ENCODE measurements at regions of chr12 and their contacts with region 1.

Region 1: DNA sequence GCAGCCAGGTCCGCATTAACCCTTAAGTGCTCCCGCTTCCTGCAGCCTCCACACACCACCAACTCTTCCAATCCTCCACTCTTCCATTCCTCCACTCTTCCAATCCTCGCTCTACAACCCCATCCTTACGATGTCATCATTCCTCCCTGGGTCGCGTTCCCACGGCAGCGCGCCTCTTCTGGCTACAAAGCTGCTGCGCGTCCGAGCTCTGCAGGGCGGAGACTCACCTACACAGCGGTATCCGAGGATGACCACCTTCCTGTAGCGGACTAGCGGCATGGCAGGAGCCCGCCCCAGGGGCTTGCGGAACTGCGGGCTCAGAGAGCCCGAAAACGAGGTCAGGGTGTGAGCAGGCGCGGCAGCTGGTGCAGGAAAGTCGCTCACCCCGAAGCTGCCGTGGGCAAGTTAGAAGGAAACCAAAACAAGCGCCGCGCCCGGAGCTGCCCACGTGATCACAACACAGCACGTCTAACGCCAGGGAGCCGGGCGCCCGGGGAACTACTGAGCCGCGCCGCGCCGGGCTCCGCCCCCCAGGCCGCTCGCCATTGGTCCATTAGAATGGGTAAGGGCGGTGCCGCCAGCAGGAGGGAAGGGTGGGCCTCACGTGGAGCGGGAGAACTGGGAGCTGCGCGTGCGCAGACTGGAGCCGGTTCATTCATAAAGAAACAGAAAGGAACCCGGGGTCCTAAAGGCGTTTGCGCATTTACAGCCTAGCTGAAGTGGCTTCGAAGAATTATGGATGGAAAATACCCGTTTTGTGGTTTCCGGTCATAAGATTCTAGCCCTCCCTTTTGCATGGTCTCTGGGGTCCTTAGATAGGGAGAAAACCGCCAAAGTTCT is at the start of gene RHEBL1:
- DNase-seq: peak; percentile 99
- ATAC-seq: peak; percentile 100
- H3K4me3 ChIP-seq: peak within 1 kb of the TSS; percentile 69 to 96 (median 87)
- H3K4me3 Mint-ChIP-seq: peak within 1 kb of the TSS; percentile 94
- H3K27ac ChIP-seq: peak within 1 kb of the TSS; percentile 61 to 92
- H3K27ac Mint-ChIP-seq: peak within 1 kb of the TSS; percentile 86
- H3K4me1 ChIP-seq: peaks cover 10 to 15% of the 10 kb centered on the region in 2 donors
- H3K4me1 Mint-ChIP-seq: peaks cover 19% of the 10 kb centered on the region
- H3K27me3 ChIP-seq: no peaks in the 10 kb centered on the region
- H3K27me3 Mint-ChIP-seq: no peaks in the 10 kb centered on the region
- CTCF ChIP-seq: no peak
- total RNA-seq, gene RHEBL1: 3.0 TPM in 2 replicates

Region 2: DNA sequence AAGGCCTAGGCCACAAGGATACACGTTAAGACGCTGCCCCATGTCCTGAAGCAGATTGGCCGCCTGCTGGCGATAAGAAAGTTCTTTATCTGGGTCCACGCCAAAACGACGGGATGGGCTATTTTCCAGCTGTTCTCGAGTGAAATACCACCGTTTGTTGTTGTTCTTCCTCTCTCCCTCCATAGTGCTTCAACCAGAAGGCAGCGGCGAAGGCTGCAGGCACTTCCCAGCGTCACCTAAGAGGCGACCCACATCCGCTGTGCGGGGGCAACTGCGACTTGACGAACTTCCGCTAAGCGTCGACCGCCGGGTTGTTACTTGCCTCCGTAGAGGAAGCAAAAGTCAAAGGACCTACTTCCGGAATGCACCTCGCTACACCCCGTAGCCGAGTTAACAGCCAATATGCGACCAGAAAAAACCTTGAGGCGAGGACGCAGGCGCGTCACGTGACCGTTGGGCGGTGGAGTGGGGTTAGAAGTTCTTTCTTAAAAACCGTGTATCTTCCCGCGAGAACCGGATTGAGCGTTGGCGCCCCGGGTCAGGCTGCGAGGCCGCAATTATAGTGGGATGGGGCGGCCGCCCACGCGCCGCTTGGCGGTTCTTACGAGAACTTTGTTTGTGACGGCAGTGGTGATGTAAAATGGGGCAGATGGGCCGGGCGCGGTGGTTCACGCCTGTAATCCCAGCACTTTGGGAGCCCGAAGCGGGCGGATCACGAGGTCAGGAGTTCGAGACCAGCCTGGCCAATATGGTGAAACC is 353.1 kb before region 1 on chr12 and contains the start of gene CCNT1:
- CTCF ChIA-PET with region 1: no interaction called
- POLR2A ChIA-PET with region 1: no interaction called
- intact Hi-C with region 1: loop called (anchors 10 kb)
- DNase-seq: peak; percentile 100
- ATAC-seq: peak; percentile 91
- H3K4me3 ChIP-seq: peak within 1 kb of the TSS; percentile 82 to 98 (median 95)
- H3K4me3 Mint-ChIP-seq: peak within 1 kb of the TSS; percentile 88
- H3K27ac ChIP-seq: peak within 1 kb of the TSS; percentile 95 to 96
- H3K27ac Mint-ChIP-seq: peak within 1 kb of the TSS; percentile 97
- H3K4me1 ChIP-seq: peaks cover 19 to 27% of the 10 kb centered on the region in 2 donors
- H3K4me1 Mint-ChIP-seq: peaks cover 34% of the 10 kb centered on the region
- H3K27me3 ChIP-seq: no peaks in the 10 kb centered on the region
- H3K27me3 Mint-ChIP-seq: peaks cover 4% of the 10 kb centered on the region
- CTCF ChIP-seq: no peak
- total RNA-seq, gene CCNT1: 73.1 and 77.3 TPM in 2 replicates

Region 3: GRCh38 chr12:49018261-49019119 is 51.2 kb before region 1 on chr12 and contains the start of gene PRKAG1:
- CTCF ChIA-PET with region 1: interaction called, 3 read pairs
- POLR2A ChIA-PET with region 1: no interaction called
- intact Hi-C with region 1: loop called (anchors 1 kb)
- DNase-seq: peak; percentile 98
- ATAC-seq: peak; percentile 88
- H3K4me3 ChIP-seq: peak within 1 kb of the TSS; percentile 79 to 88 (median 86)
- H3K4me3 Mint-ChIP-seq: peak within 1 kb of the TSS; percentile 91
- H3K27ac ChIP-seq: peak within 1 kb of the TSS; percentile 95 to 99
- H3K27ac Mint-ChIP-seq: peak within 1 kb of the TSS; percentile 98
- H3K4me1 ChIP-seq: peaks cover 18 to 21% of the 10 kb centered on the region in 2 donors
- H3K4me1 Mint-ChIP-seq: peaks cover 29% of the 10 kb centered on the region
- H3K27me3 ChIP-seq: no peaks in the 10 kb centered on the region
- H3K27me3 Mint-ChIP-seq: no peaks in the 10 kb centered on the region
- CTCF ChIP-seq: peak; percentile 74
- total RNA-seq, gene PRKAG1: 58.6 and 60.0 TPM in 2 replicates

Region 4: DNA sequence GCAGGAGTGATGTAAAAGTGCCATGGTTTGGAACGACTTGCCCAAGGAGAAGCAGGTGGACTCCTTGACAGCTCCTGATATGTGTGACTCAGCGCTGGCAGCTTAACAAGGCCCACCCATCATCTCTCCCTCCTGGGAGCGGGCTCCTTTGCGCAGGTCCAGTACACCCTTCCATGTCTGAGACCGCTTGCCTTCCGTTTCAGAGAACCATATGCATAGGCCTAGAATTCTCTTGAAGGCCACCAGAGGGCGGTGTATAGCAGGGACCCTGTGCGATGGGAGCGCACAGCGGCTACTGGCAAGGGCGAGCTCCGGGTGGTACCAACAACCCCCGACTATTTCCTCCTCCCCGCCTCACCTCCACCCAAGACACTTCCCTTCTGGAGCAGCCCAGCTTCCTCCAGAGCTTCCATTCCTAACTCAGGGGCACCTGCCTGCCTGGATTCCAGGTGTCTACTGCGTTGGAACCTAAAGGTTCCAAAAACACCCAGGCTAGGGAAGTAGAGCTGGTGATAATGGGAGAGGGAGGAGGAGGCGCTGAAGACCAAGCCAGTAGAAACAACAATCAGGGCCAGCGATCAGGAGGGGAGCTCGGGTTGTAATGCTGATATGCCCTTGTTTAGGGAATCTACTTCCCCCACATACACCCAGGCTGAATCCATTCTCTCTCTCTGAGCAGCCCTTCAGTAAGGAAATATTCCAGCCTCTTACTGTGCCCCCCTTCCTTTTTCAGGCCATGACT is 18.6 kb after region 1 on chr12:
- CTCF ChIA-PET with region 1: interaction called, 199 read pairs
- POLR2A ChIA-PET with region 1: no interaction called
- intact Hi-C with region 1: loop called (anchors 1 kb)
- DNase-seq: peak; percentile 88
- ATAC-seq: peak; percentile 92
- H3K4me3 ChIP-seq: peak overlapping the region in 1 of 5 experiments; percentile 10
- H3K4me3 Mint-ChIP-seq: peak overlapping the region; percentile 70
- H3K27ac ChIP-seq: no peak overlapping the region
- H3K27ac Mint-ChIP-seq: no peak overlapping the region
- H3K4me1 ChIP-seq: peaks cover 47 to 48% of the 10 kb centered on the region in 2 donors
- H3K4me1 Mint-ChIP-seq: peaks cover 38% of the 10 kb centered on the region
- H3K27me3 ChIP-seq: peaks cover 0 to 57% (median 37%) of the 10 kb centered on the region in 4 experiments
- H3K27me3 Mint-ChIP-seq: peaks cover 46% of the 10 kb centered on the region
- CTCF ChIP-seq: peak; percentile 96